Sigmoid colon (tissue), 7 donors: ENCODE measurements at regions of chr5 and their contacts with region 1.

Region 1: GRCh38 chr5:81125959-81126358 is 107.2 kb upstream of the CKMT2 start:
- DNase-seq: peak; percentile 87
- H3K4me3 ChIP-seq: no peak overlapping the region
- H3K27ac ChIP-seq: peak overlapping the region in 3 of 4 donors; percentile 11 to 60 (median 29)
- H3K4me1 ChIP-seq: peaks cover 0 to 14% (median 3%) of the 10 kb centered on the region in 4 donors
- H3K27me3 ChIP-seq: no peaks in the 10 kb centered on the region
- CTCF ChIP-seq: no peak
- EP300 ChIP-seq: peak in 1 of 4 donors; percentile 6
- POLR2A ChIP-seq: no peak

Region 2: DNA sequence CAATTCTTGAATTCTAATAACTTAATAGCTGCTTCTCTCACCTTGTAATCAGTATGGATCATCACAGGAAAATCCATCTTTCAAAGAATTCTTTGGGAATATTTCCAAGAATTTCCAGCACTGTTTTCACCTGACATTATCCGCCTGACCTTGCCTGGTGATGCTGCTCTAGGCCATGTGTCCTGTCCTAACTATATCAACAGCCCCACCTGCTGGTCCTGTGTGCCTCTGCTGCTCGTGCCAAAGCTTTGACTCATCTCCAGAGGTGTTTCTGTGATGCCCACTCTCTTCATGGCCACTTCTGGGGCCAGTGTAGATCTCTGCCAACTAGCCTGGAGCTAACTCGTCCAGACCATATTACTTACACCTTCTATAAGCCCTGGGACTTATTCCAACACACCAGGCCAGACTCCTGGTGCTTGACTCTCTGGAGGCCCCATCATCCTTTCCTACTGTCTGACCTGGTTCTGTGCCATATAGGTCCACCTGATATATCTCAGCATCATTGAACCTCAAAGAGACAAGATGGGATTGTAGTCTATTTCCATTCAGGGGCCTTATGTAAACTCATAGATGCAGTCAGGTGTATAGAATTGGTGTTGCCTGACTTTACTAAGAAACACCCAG is 39.6 kb after region 1 on chr5:
- intact Hi-C with region 1: loop called (anchors 1 kb)
- DNase-seq: no peak
- H3K4me3 ChIP-seq: no peak overlapping the region
- H3K27ac ChIP-seq: peak overlapping the region in 1 of 4 donors; percentile 81
- H3K4me1 ChIP-seq: peaks cover 0 to 29% (median 12%) of the 10 kb centered on the region in 4 donors
- H3K27me3 ChIP-seq: no peaks in the 10 kb centered on the region
- CTCF ChIP-seq: peak in 1 of 4 experiments; percentile 44
- EP300 ChIP-seq: no peak
- POLR2A ChIP-seq: no peak